ENCODE measurements at regions of chr4 and their contacts with region 1.

Region 1: GRCh38 chr4:140884431-140885058 is 128.4 kb upstream of the TBC1D9 start:
- DNase-seq: peak; percentile 46
- H3K4me3 ChIP-seq: no peak overlapping the region
- H3K27ac ChIP-seq: no peak overlapping the region
- H3K4me1 ChIP-seq: no peaks in the 10 kb centered on the region
- H3K27me3 ChIP-seq: peaks cover 3% of the 10 kb centered on the region
- CTCF ChIP-seq: peak; percentile 61 to 87

Region 2: DNA sequence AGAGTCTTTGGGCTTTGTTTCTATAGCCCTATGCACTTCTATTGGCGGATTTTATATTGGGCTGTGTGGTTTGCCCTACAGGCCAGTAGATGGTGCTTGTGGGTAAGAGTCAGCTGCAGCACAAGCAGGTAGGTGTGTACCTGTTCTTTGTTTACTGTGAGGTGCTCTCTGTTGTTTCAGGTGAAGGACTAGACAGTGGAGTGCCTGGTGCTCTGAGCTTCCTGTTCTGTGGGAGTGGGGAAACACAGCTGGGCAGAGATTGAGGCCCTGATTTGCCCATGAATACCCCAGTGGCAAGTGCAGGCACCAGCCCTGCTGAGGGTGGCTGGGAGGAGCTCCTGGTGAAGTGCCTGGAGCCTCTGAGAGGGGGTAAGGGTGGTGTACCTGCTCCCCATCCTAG is 289.5 kb before region 1 on chr4:
- CTCF ChIA-PET with region 1: no interaction called
- dilution Hi-C with region 1: no loop called
- in situ Hi-C with region 1: no loop called
- intact Hi-C with region 1: loop called (anchors 1 kb)
- DNase-seq: peak; percentile 53
- H3K4me3 ChIP-seq: no peak overlapping the region
- H3K27ac ChIP-seq: no peak overlapping the region
- H3K4me1 ChIP-seq: no peaks in the 10 kb centered on the region
- H3K27me3 ChIP-seq: peaks cover 2% of the 10 kb centered on the region
- CTCF ChIP-seq: peak; percentile 67 to 81

Region 3: DNA sequence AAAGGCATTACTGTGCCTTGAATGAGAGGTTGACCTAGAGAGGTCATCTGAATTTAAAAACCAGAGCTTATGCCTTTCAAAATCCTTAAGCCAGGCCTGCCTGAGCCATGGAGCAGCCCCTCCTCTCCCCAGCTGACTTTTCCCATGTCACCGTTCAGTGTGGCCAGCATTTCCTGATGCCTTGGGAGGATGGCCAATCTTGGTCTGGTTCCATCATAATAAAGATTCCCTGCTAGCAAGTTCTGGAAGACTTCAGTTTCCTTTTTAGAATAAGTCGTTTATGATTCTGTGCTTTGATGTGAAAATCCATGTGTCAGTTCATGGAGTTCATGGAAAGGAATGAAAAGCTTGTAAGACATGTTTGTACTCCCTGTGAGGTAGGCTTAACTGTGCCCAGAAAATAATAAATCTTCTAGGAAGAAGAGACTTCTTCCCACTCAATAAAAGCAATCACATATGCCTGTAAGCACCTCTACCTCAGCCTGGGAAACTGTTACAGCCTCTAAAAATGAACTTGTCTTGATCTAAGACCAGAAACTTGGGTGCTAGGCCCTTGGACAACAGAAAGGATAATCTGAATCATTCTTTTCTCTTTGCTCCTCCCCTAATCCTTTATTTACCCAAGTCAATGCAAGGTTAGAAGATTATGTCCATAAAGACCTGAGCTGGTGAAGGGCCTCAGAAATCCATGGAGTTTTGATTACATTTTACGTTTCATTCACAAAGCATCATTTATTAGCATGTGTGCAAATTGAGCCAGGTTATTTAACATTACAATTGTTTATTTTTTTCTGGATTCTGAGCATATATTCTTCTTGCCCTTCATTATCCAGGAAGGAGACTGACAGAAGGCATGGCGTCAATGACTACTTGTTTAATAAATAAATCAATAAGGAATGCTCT is 44.4 kb before region 1 on chr4:
- CTCF ChIA-PET with region 1: no interaction called
- dilution Hi-C with region 1: no loop called
- in situ Hi-C with region 1: no loop called
- intact Hi-C with region 1: no loop called
- DNase-seq: no peak
- H3K4me3 ChIP-seq: no peak overlapping the region
- H3K27ac ChIP-seq: no peak overlapping the region
- H3K4me1 ChIP-seq: no peaks in the 10 kb centered on the region
- H3K27me3 ChIP-seq: peaks cover 3% of the 10 kb centered on the region
- CTCF ChIP-seq: no peak

Region 4: DNA sequence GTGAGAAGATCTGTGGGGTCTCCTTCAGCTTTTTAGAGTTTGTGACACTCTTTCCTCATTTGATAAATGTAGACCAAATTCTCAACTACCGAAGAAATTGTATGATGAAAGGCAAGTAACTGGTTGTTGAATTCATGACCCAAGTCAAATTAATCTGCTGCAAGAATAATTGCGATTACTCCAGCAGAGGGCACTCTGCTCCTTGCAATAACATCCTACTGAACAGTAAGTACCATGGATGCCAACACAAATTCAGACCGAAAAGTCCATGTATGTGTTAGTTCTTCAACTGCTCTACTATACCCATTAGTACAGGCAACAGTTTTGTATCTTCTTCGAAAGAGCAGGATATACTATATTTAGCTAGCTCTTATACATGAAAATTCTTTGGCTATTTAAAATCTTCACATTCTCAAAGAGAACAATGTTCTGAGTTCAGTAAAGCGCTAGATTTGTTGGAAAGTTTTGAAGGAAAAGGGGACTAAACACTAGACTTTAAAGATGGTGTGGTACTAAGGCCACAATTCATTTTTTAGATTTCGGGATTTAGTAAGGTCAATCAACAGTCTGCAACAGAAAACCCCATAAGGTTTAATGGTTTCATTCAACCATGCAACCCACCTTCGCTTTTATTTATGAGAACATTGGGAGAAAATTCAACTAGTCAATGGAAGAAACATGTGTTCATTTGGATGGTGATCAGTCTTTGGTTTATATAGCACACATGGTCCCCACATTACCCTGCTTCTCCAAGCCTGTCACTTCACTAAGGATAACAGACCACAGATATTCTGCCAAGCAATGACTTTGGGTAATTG is 23.0 kb before region 1 on chr4:
- CTCF ChIA-PET with region 1: no interaction called
- dilution Hi-C with region 1: no loop called
- in situ Hi-C with region 1: no loop called
- intact Hi-C with region 1: loop called (anchors 1 kb)
- DNase-seq: peak; percentile 56
- H3K4me3 ChIP-seq: no peak overlapping the region
- H3K27ac ChIP-seq: no peak overlapping the region
- H3K4me1 ChIP-seq: peaks cover 25% of the 10 kb centered on the region
- H3K27me3 ChIP-seq: peaks cover 3% of the 10 kb centered on the region
- CTCF ChIP-seq: peak; percentile 75 to 76

Region 5: DNA sequence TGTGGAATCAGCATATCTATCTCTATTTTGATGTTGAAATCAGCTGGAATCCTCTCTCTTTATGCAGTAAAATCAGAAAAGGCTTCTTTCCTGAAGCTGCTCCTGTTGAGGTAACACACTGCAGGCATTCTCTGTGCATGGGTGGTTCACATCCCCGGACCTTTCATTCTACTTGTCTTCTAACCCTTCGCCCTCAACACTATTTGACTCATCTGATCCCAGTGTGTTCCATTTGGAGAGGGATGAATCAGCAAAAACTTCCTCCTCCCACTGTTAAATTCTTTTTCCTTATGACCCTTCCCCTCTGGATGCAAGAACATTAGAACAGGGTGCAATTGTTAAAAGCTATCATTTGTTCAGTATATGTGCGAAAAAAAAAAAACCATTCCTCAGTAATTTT is 181.3 kb after region 1 on chr4:
- CTCF ChIA-PET with region 1: no interaction called
- dilution Hi-C with region 1: no loop called
- in situ Hi-C with region 1: no loop called
- intact Hi-C with region 1: no loop called
- DNase-seq: no peak
- H3K4me3 ChIP-seq: no peak overlapping the region
- H3K27ac ChIP-seq: no peak overlapping the region
- H3K4me1 ChIP-seq: no peaks in the 10 kb centered on the region
- H3K27me3 ChIP-seq: no peaks in the 10 kb centered on the region
- CTCF ChIP-seq: no peak

Region 6: DNA sequence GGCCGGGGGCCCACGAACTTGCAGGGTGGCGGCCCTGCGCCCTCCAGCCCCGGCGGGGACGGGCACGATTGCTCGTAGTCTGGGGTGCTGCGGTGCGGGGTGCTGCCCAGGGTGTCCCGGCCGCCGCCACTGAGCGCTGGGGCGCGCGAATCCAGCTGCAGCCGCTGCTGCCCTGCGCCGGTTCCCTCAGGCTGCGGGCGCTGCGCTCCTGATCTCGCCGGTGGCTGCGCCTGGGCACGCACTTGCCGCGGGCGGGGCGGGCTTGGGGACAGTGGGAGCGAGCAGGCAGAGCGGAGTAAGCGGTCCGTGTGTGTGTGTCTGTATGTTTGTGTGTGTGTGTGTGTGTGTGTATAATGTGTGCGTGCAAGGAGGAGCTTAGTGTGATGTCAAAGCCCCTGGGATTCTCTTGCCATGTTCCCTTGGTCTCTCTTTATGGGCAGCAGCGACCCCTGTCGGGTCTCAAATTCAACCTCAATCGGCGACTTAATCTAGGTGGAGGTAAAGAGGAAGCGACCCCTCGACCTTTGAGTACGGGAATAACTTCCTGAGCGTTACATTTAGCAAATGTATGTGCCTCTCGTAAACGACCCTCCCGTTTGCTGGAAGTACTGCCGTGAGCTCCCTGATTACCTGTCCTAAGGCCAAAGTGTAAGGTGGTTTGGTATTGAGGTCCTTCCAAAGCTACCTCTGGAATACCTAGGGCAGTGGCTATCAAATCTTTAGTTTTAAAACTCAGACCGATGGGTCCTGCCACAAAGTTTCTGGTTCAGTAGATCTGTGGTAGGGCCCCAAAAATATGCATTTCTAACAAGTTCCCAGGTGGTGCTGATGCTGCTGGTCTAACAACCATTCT is 248.8 kb after region 1 on chr4 and contains the start of gene RNF150:
- CTCF ChIA-PET with region 1: interaction called, 3 read pairs
- dilution Hi-C with region 1: no loop called
- in situ Hi-C with region 1: no loop called
- intact Hi-C with region 1: loop called (anchors 5 kb)
- DNase-seq: peak; percentile 63
- H3K4me3 ChIP-seq: peak within 1 kb of the TSS; percentile 35 to 63 (median 58)
- H3K27ac ChIP-seq: no peak within 1 kb of the TSS
- H3K4me1 ChIP-seq: peaks cover 13% of the 10 kb centered on the region
- H3K27me3 ChIP-seq: peaks cover 29% of the 10 kb centered on the region
- CTCF ChIP-seq: peak; percentile 32 to 65
- total RNA-seq, gene RNF150: 5.0 TPM in 1 of 2 donors, not detected in the other

Region 7: DNA sequence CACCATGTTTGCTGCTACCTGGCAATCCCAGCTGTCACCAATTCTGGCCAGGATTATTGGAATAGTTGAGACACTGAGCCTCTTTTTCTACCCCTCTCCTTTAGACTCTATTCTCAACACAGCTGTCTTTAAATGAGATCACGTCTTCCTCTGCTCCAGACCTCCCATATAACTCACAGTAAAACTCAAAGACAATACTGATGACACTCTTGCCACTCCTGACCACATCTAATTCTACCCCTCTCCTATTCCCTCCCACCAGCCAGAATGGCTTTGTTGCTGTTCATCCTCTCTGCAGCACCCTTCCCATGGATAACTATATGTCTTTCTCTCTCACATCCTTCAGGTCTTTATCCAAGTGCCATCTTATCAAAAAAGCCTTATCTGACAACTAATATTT is 563.2 kb after region 1 on chr4:
- CTCF ChIA-PET with region 1: no interaction called
- dilution Hi-C with region 1: no loop called
- in situ Hi-C with region 1: no loop called
- intact Hi-C with region 1: no loop called
- DNase-seq: no peak
- H3K4me3 ChIP-seq: no peak overlapping the region
- H3K27ac ChIP-seq: no peak overlapping the region
- H3K4me1 ChIP-seq: no peaks in the 10 kb centered on the region
- H3K27me3 ChIP-seq: no peaks in the 10 kb centered on the region
- CTCF ChIP-seq: no peak